B cell (primary cell): ENCODE measurements at regions of chr3 and their contacts with region 1.

Region 1: DNA sequence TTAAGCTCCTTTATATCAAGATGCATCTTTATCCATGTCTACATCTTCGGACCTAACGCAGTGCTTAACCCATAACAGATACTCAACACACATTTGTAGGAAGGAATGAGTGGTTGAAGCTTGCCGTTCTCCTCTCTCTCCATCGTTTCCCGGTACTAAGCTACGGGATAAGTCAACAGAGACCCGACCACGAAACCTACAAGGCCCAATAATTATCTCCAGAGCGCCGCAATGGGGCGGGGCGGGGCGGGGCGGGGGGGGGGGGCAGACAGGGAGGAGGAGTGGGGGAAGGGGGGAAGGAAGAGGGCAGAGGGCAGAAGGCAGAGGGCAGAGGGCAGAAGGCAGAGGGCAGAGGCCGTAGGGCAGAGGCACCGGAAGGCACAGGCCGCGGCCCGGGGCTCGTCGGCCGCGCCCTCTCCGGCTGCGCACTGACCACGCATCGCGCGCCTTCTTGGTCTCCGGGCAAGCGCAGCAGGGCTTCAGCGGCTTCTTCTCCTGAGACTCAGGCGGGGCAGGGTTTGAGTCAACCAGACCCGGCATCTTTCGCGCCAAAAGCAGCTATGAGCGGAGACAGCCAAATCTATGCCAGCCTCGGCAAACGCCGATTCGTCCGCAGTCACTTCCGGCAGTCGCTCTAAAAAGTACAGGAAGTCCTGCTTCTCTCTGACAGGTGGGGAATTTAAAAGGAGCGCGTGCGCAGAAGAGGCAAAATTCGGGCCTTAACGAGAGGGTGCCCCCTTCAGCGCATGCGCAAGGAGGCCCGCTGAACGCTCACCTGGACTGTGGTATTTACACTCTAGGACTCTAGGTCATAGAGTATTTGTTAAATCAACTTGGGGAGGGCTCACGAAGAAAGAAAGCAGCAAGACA is at the start of gene COX17:
- DNase-seq: peak; percentile 99
- ATAC-seq: peak; percentile 83
- H3K4me3 ChIP-seq: peak within 1 kb of the TSS; percentile 68 to 79 (median 74)
- H3K4me3 Mint-ChIP-seq: peak within 1 kb of the TSS; percentile 88
- H3K27ac ChIP-seq: peak within 1 kb of the TSS; percentile 89 to 96
- H3K27ac Mint-ChIP-seq: peak within 1 kb of the TSS; percentile 96
- H3K4me1 ChIP-seq: peaks cover 17% of the 10 kb centered on the region in 2 donors
- H3K4me1 Mint-ChIP-seq: peaks cover 27% of the 10 kb centered on the region
- H3K27me3 ChIP-seq: no peaks in the 10 kb centered on the region
- H3K27me3 Mint-ChIP-seq: no peaks in the 10 kb centered on the region
- CTCF ChIP-seq: no peak
- total RNA-seq, gene COX17: 47.8 and 49.1 TPM in 2 replicates

Region 2: GRCh38 chr3:118884748-118885206 is 792.2 kb before region 1 on chr3:
- CTCF ChIA-PET with region 1: interaction called, 101 read pairs
- POLR2A ChIA-PET with region 1: no interaction called
- intact Hi-C with region 1: no loop called
- DNase-seq: peak; percentile 57
- ATAC-seq: peak; percentile 78
- H3K4me3 ChIP-seq: no peak overlapping the region
- H3K4me3 Mint-ChIP-seq: no peak overlapping the region
- H3K27ac ChIP-seq: no peak overlapping the region
- H3K27ac Mint-ChIP-seq: no peak overlapping the region
- H3K4me1 ChIP-seq: no peaks in the 10 kb centered on the region
- H3K4me1 Mint-ChIP-seq: no peaks in the 10 kb centered on the region
- H3K27me3 ChIP-seq: peaks cover 0 to 3% (median 1%) of the 10 kb centered on the region in 4 experiments
- H3K27me3 Mint-ChIP-seq: peaks cover 28% of the 10 kb centered on the region
- CTCF ChIP-seq: peak; percentile 90

Region 3: DNA sequence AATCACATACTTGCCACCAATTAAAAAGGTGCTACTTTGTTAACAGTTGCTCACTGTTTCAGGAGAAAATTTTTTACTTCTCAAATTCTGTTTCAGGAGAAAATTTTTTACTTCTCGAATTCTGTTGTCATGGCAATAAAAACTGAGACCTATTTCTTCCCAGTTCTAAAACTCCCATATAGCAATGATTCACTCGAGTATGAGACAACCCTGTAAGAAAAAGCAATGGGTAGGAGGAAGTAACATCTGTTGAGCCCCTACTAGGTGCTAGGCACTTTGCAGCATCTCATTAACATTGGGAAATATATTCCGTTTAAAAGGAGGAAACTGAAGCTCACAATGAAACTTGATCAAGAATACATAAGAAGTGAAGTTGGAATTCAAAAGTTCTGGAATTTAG is 607.3 kb before region 1 on chr3:
- CTCF ChIA-PET with region 1: no interaction called
- POLR2A ChIA-PET with region 1: no interaction called
- intact Hi-C with region 1: no loop called
- DNase-seq: no peak
- ATAC-seq: no peak
- H3K4me3 ChIP-seq: no peak overlapping the region
- H3K4me3 Mint-ChIP-seq: no peak overlapping the region
- H3K27ac ChIP-seq: no peak overlapping the region
- H3K27ac Mint-ChIP-seq: no peak overlapping the region
- H3K4me1 ChIP-seq: no peaks in the 10 kb centered on the region
- H3K4me1 Mint-ChIP-seq: no peaks in the 10 kb centered on the region
- H3K27me3 ChIP-seq: no peaks in the 10 kb centered on the region
- H3K27me3 Mint-ChIP-seq: peaks cover 10% of the 10 kb centered on the region
- CTCF ChIP-seq: no peak

Region 4: GRCh38 chr3:119322835-119323722 is 353.9 kb before region 1 on chr3:
- CTCF ChIA-PET with region 1: no interaction called
- POLR2A ChIA-PET with region 1: no interaction called
- intact Hi-C with region 1: loop called (anchors 1 kb)
- DNase-seq: peak; percentile 97
- ATAC-seq: peak; percentile 86
- H3K4me3 ChIP-seq: peak overlapping the region; percentile 44 to 86 (median 61)
- H3K4me3 Mint-ChIP-seq: peak overlapping the region; percentile 88
- H3K27ac ChIP-seq: peak overlapping the region; percentile 86 to 87
- H3K27ac Mint-ChIP-seq: peak overlapping the region; percentile 93
- H3K4me1 ChIP-seq: peaks cover 13 to 22% of the 10 kb centered on the region in 2 donors
- H3K4me1 Mint-ChIP-seq: peaks cover 48% of the 10 kb centered on the region
- H3K27me3 ChIP-seq: no peaks in the 10 kb centered on the region
- H3K27me3 Mint-ChIP-seq: no peaks in the 10 kb centered on the region
- CTCF ChIP-seq: no peak

Region 5: GRCh38 chr3:119498186-119498987 is 178.6 kb before region 1 on chr3 and contains the start of gene TIMMDC1:
- CTCF ChIA-PET with region 1: interaction called, 5 read pairs
- POLR2A ChIA-PET with region 1: interaction called, 9 read pairs
- intact Hi-C with region 1: loop called (anchors 1 kb)
- DNase-seq: peak; percentile 97
- ATAC-seq: peak; percentile 99
- H3K4me3 ChIP-seq: peak within 1 kb of the TSS; percentile 86 to 98 (median 94)
- H3K4me3 Mint-ChIP-seq: peak within 1 kb of the TSS; percentile 100
- H3K27ac ChIP-seq: peak within 1 kb of the TSS; percentile 82 to 91
- H3K27ac Mint-ChIP-seq: peak within 1 kb of the TSS; percentile 98
- H3K4me1 ChIP-seq: peaks cover 16 to 18% of the 10 kb centered on the region in 2 donors
- H3K4me1 Mint-ChIP-seq: peaks cover 26% of the 10 kb centered on the region
- H3K27me3 ChIP-seq: no peaks in the 10 kb centered on the region
- H3K27me3 Mint-ChIP-seq: no peaks in the 10 kb centered on the region
- CTCF ChIP-seq: no peak
- total RNA-seq, gene TIMMDC1: 58.5 and 70.9 TPM in 2 replicates

Region 6: GRCh38 chr3:119579366-119580165 is 97.4 kb before region 1 on chr3 and contains the start of gene ADPRH:
- CTCF ChIA-PET with region 1: interaction called, 3 read pairs
- POLR2A ChIA-PET with region 1: interaction called, 4 read pairs
- intact Hi-C with region 1: loop called (anchors 5 kb)
- DNase-seq: peak; percentile 81
- ATAC-seq: peak; percentile 76
- H3K4me3 ChIP-seq: peak within 1 kb of the TSS; percentile 64 to 94 (median 78)
- H3K4me3 Mint-ChIP-seq: peak within 1 kb of the TSS; percentile 99
- H3K27ac ChIP-seq: peak within 1 kb of the TSS; percentile 94 to 98
- H3K27ac Mint-ChIP-seq: peak within 1 kb of the TSS; percentile 100
- H3K4me1 ChIP-seq: peaks cover 12 to 19% of the 10 kb centered on the region in 2 donors
- H3K4me1 Mint-ChIP-seq: peaks cover 30% of the 10 kb centered on the region
- H3K27me3 ChIP-seq: no peaks in the 10 kb centered on the region
- H3K27me3 Mint-ChIP-seq: no peaks in the 10 kb centered on the region
- CTCF ChIP-seq: no peak
- total RNA-seq, gene ADPRH: 18.8 and 24.5 TPM in 2 replicates

Region 7: GRCh38 chr3:119690043-119690656 is 13.1 kb after region 1 on chr3:
- CTCF ChIA-PET with region 1: interaction called, 11 read pairs
- POLR2A ChIA-PET with region 1: no interaction called
- intact Hi-C with region 1: no loop called
- DNase-seq: no peak
- ATAC-seq: no peak
- H3K4me3 ChIP-seq: no peak overlapping the region
- H3K4me3 Mint-ChIP-seq: no peak overlapping the region
- H3K27ac ChIP-seq: no peak overlapping the region
- H3K27ac Mint-ChIP-seq: no peak overlapping the region
- H3K4me1 ChIP-seq: no peaks in the 10 kb centered on the region
- H3K4me1 Mint-ChIP-seq: no peaks in the 10 kb centered on the region
- H3K27me3 ChIP-seq: no peaks in the 10 kb centered on the region
- H3K27me3 Mint-ChIP-seq: no peaks in the 10 kb centered on the region
- CTCF ChIP-seq: peak; percentile 71

Region 8: DNA sequence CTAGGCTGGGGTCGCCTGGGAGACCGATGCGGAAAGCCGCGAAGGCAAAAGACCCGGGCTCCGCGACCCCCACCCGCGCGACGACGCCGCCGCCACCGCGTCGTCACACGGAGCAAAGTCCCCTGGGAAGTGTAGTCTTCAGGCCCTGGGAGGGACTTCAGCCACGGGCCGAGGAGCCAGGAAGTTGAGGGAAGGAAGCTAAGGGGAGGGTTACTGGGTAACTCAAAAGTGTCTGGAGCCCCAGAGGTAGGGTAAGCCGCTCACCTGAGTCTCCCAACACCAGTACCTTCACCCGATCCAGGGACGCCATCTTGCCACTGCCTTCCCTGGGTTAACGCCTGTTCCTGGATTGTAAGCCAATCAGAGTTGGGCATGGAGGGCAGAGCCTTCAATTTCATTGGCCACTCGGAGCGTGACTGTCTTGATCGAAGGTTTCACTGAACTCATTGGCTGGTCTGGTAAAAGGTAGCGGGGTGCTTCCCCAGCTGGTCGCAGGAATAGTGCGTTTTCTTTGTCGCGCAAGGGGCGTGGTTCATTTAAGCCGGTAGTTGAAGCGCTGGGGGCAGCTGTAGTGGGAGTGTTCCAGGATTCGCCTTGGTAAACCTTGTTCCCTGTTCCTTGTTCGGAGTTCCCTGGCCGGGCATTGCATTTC is 1065.3 kb after region 1 on chr3 and contains the starts of genes GTF2E1 and RABL3:
- CTCF ChIA-PET with region 1: no interaction called
- POLR2A ChIA-PET with region 1: no interaction called
- intact Hi-C with region 1: loop called (anchors 1 kb)
- DNase-seq: peak; percentile 98
- ATAC-seq: peak; percentile 96
- H3K4me3 ChIP-seq: peak within 1 kb of the TSS; percentile 78 to 98 (median 94)
- H3K4me3 Mint-ChIP-seq: peak within 1 kb of the TSS; percentile 95
- H3K27ac ChIP-seq: peak within 1 kb of the TSS; percentile 99 to 100
- H3K27ac Mint-ChIP-seq: peak within 1 kb of the TSS; percentile 96
- H3K4me1 ChIP-seq: peaks cover 12 to 15% of the 10 kb centered on the region in 2 donors
- H3K4me1 Mint-ChIP-seq: peaks cover 29% of the 10 kb centered on the region
- H3K27me3 ChIP-seq: no peaks in the 10 kb centered on the region
- H3K27me3 Mint-ChIP-seq: no peaks in the 10 kb centered on the region
- CTCF ChIP-seq: no peak
- total RNA-seq, gene GTF2E1: 23.0 and 24.7 TPM in 2 replicates
- total RNA-seq, gene RABL3: 18.8 and 19.5 TPM in 2 replicates